HepG2 (cell line): ENCODE measurements at regions of chr2 and their contacts with region 1.

Region 1: GRCh38 chr2:6024784-6025183 is 332.6 kb downstream of the SOX11 start:
- DNase-seq: no peak
- ATAC-seq: no peak
- H3K4me3 ChIP-seq: no peak overlapping the region
- H3K27ac ChIP-seq: no peak overlapping the region
- H3K4me1 ChIP-seq: no peaks in the 10 kb centered on the region
- H3K27me3 ChIP-seq: no peaks in the 10 kb centered on the region
- CTCF ChIP-seq: no peak
- EP300 ChIP-seq: no peak
- POLR2A ChIP-seq: no peak
- RAD21 ChIP-seq: no peak

Region 2: GRCh38 chr2:5264309-5264803 is 760.4 kb before region 1 on chr2:
- CTCF ChIA-PET with region 1: no interaction called
- POLR2A ChIA-PET with region 1: no interaction called
- in situ Hi-C with region 1: no loop called
- intact Hi-C with region 1: loop called (anchors 5 kb)
- DNase-seq: no peak
- ATAC-seq: no peak
- H3K4me3 ChIP-seq: no peak overlapping the region
- H3K27ac ChIP-seq: no peak overlapping the region
- H3K4me1 ChIP-seq: no peaks in the 10 kb centered on the region
- H3K27me3 ChIP-seq: no peaks in the 10 kb centered on the region
- CTCF ChIP-seq: no peak
- EP300 ChIP-seq: no peak
- POLR2A ChIP-seq: no peak
- RAD21 ChIP-seq: no peak

Region 3: GRCh38 chr2:6214471-6214870 is 189.7 kb after region 1 on chr2:
- CTCF ChIA-PET with region 1: no interaction called
- POLR2A ChIA-PET with region 1: no interaction called
- in situ Hi-C with region 1: no loop called
- intact Hi-C with region 1: no loop called
- DNase-seq: no peak
- ATAC-seq: no peak
- H3K4me3 ChIP-seq: no peak overlapping the region
- H3K27ac ChIP-seq: no peak overlapping the region
- H3K4me1 ChIP-seq: no peaks in the 10 kb centered on the region
- H3K27me3 ChIP-seq: no peaks in the 10 kb centered on the region
- CTCF ChIP-seq: no peak
- EP300 ChIP-seq: no peak
- POLR2A ChIP-seq: no peak
- RAD21 ChIP-seq: no peak